ENCODE measurements at regions of chr4 and their contacts with region 1.

Region 1: DNA sequence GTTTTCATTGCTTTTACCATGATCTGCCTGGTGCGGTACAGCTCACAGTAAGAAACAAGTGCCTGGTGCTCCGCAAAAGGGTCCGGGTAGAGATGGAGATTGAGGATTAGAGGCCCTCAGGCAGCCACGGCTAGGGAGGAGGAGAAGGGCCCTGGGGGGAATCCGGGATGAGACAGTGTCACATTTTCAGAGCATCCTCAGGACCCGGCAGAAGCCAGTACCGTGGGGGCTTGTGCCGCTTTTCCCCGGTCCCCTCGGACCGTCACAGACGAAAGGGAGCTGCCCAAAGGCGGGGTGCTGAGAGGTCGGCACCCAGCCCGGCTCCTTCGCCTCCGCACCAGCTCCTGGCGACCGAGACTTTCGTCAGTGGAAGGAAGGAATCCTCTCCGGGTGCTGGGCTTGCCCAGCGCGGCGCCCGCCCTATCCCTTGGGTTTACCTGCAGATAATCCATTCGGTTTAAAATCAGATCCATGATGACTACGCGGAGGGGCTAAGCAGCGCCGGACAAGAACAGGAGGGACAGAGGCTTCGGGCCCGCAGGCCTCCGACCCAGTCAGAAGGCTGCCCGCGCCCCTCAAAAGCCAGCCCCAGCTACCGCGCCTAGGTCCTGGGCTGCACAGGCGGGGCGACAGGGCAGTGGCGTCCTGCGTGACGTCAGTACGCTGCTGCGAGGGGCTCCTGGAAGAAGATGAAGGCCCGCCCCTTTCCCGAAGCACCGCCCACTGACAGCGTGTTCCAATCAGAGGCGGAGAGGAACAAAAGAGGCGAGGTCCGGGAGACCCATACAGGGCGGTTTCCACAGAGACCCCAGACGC is at the start of gene BBS7:
- DNase-seq: peak; percentile 94 to 99 (median 97)
- H3K4me3 ChIP-seq: peak within 1 kb of the TSS; percentile 56 to 98 (median 89)
- H3K27ac ChIP-seq: peak within 1 kb of the TSS; percentile 30 to 97 (median 90)
- H3K27me3 ChIP-seq: no peaks in the 10 kb centered on the region
- CTCF ChIP-seq: peak in 7 of 56 donors; percentile 4 to 30 (median 11)
- total RNA-seq, gene BBS7: 22.1 to 76.8 (median 47.2) TPM

Region 2: DNA sequence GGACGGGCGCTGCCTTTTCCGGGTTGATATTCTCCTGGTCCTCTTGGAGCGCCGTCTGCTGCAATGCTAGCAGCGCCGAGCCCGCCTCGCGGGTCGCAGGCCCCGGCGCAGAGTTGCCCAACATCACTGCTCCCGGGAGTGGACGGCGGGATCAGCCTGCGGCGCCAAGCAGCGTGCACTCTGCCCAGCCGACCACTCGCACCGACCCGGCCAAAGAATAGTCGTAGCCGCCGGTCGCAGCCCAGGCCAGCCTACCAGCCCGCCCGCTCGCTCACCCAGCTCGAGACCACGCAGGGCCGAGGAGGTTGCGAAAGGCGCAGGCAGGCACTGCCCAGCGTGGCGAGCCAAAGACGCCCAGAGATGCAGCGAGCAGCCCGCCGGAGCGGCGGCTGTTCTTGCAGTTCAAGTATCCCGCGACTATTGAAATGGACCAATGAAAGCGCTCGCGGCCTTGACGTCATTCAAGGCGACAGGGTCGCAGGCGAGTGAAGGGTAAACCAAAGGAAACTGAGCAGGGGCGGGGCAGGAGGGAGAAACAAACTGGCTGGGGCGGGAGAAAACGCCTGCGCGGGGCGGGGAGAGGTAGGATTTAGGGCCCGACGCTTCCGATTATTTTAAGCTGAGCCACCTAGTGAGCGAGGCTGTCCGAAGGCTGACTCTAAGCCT is 46.4 kb before region 1 on chr4 and contains the start of gene CCNA2:
- intact Hi-C with region 1: loop called in 1 of 2 experiments (anchors 5 kb)
- DNase-seq: peak; percentile 94 to 98 (median 97)
- H3K4me3 ChIP-seq: peak within 1 kb of the TSS; percentile 46 to 85 (median 70)
- H3K27ac ChIP-seq: peak within 1 kb of the TSS in 48 of 59 donors; percentile 10 to 87 (median 72)
- H3K27me3 ChIP-seq: no peaks in the 10 kb centered on the region
- CTCF ChIP-seq: peak in 21 of 56 donors; percentile 5 to 48 (median 23)
- total RNA-seq, gene CCNA2: 1.1 to 11.7 (median 2.7) TPM